ENCODE measurements at regions of chr6 and their contacts with region 1.

Region 1: GRCh38 chr6:75402296-75402695 is 91.3 kb downstream of the FILIP1 start:
- DNase-seq: no peak
- ATAC-seq: no peak
- H3K4me3 ChIP-seq: no peak overlapping the region
- H3K4me3 Mint-ChIP-seq: no peak overlapping the region
- H3K27ac ChIP-seq: no peak overlapping the region
- H3K27ac Mint-ChIP-seq: no peak overlapping the region
- H3K4me1 ChIP-seq: no peaks in the 10 kb centered on the region
- H3K4me1 Mint-ChIP-seq: no peaks in the 10 kb centered on the region
- H3K27me3 ChIP-seq: no peaks in the 10 kb centered on the region
- H3K27me3 Mint-ChIP-seq: no peaks in the 10 kb centered on the region
- CTCF ChIP-seq: no peak

Region 2: GRCh38 chr6:74798302-74798701 is 604.0 kb before region 1 on chr6:
- CTCF ChIA-PET with region 1: no interaction called
- POLR2A ChIA-PET with region 1: no interaction called
- intact Hi-C with region 1: no loop called
- DNase-seq: no peak
- ATAC-seq: no peak
- H3K4me3 ChIP-seq: no peak overlapping the region
- H3K4me3 Mint-ChIP-seq: no peak overlapping the region
- H3K27ac ChIP-seq: no peak overlapping the region
- H3K27ac Mint-ChIP-seq: no peak overlapping the region
- H3K4me1 ChIP-seq: no peaks in the 10 kb centered on the region
- H3K4me1 Mint-ChIP-seq: no peaks in the 10 kb centered on the region
- H3K27me3 ChIP-seq: no peaks in the 10 kb centered on the region
- H3K27me3 Mint-ChIP-seq: no peaks in the 10 kb centered on the region
- CTCF ChIP-seq: no peak

Region 3: DNA sequence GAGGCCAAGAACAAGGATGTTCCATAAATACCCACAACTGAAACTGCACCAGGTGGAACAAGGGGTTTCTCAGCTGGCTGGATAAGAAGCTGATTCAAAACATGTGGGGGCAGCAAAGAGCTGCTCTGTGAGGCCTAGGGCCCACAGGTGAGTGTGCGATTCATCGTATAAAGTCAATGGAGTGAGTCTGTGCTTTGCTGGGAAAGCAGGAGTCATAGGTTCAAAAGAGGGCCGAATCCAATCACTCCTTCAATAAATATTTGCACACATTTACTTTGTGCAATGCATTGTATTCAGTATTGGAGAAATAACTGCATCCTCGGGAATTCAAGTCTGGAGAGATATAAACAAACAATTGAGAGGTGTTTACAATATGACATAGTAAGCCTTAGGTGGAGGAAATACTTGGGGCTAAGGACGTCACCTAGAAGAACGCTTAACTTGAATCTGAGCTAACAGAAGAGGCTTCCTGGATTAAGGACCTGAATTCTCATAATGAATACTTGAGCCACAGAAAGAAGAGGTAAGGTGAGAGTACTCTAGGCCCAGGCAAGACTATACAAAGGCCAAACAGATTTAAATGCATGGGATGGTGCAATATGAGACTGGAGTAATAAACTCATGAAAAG is 34.0 kb before region 1 on chr6:
- CTCF ChIA-PET with region 1: no interaction called
- POLR2A ChIA-PET with region 1: no interaction called
- intact Hi-C with region 1: loop called in 1 of 2 experiments (anchors 1 kb)
- DNase-seq: peak in 2 of 9 experiments; percentile 2 to 3
- ATAC-seq: no peak
- H3K4me3 ChIP-seq: no peak overlapping the region
- H3K4me3 Mint-ChIP-seq: no peak overlapping the region
- H3K27ac ChIP-seq: no peak overlapping the region
- H3K27ac Mint-ChIP-seq: no peak overlapping the region
- H3K4me1 ChIP-seq: no peaks in the 10 kb centered on the region
- H3K4me1 Mint-ChIP-seq: no peaks in the 10 kb centered on the region
- H3K27me3 ChIP-seq: peaks cover 0 to 5% of the 10 kb centered on the region in 2 experiments
- H3K27me3 Mint-ChIP-seq: peaks cover 2% of the 10 kb centered on the region
- CTCF ChIP-seq: no peak